ENCODE measurements at regions of chr1 and their contacts with region 1.

Region 1: DNA sequence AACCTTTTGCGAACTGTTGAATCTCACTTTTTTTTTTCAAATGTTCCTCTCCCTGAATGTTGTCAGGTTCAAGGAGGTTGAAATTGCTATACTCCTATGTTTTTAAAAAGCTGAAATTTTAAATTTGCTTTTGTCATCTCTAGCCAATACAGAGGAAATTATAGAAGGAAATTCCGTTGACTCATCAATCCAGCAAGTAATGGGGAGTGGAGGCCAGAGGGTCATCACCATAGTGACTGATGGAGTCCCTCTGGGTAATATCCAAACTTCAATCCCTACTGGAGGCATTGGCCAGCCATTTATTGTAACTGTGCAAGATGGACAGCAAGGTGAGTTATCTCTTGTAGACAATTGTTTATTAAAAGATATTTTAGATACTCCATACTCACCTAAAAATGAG is 36.3 kb downstream of the GABPB2 start:
- DNase-seq: no peak
- H3K4me3 Mint-ChIP-seq: no peak overlapping the region
- H3K27ac Mint-ChIP-seq: no peak overlapping the region
- H3K4me1 Mint-ChIP-seq: no peaks in the 10 kb centered on the region
- H3K27me3 Mint-ChIP-seq: no peaks in the 10 kb centered on the region

Region 2: DNA sequence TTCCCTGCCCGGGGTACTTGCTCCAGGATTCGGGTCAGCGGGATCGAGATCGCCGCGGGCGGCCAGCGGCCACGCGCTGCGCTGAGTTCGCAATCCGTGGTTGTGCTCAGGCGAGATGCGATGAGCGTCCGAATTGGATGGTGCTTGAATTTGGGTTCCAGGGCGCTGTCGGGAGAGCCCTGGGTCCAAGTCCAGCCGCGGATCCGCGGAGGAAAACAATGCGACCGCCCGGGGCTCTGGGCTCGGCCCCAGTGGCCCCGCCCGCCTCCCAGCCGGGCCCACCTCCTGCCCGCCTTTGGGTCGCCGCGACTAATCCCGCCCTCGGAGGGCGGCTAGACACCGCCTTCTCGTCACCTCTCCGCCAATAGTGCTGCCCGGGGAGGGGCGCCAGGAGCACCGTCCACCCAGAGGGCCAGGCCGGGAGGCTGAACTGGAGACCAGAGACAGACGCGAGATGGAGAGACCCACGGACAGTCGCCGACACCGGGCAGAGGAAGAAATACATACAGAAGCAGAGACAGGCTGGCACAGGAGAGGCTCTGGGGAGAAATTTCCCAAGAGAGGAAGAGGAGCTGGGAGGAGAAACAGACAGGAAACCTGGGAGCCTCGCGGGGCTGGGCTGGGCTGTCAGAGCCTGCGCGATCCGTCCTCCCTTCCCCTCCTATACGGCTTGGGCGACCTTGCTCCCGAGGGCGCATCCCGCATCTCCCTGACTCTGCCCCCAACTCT is 39.7 kb after region 1 on chr1 and contains the start of gene SEMA6C:
- CTCF ChIA-PET with region 1: interaction called, 255 read pairs
- intact Hi-C with region 1: no loop called
- DNase-seq: peak; percentile 89
- H3K4me3 Mint-ChIP-seq: peak within 1 kb of the TSS; percentile 88
- H3K27ac Mint-ChIP-seq: peak within 1 kb of the TSS; percentile 51
- H3K4me1 Mint-ChIP-seq: peaks cover 6% of the 10 kb centered on the region
- H3K27me3 Mint-ChIP-seq: no peaks in the 10 kb centered on the region
- total RNA-seq, gene SEMA6C: 1.5 to 1.6 TPM

Region 3: DNA sequence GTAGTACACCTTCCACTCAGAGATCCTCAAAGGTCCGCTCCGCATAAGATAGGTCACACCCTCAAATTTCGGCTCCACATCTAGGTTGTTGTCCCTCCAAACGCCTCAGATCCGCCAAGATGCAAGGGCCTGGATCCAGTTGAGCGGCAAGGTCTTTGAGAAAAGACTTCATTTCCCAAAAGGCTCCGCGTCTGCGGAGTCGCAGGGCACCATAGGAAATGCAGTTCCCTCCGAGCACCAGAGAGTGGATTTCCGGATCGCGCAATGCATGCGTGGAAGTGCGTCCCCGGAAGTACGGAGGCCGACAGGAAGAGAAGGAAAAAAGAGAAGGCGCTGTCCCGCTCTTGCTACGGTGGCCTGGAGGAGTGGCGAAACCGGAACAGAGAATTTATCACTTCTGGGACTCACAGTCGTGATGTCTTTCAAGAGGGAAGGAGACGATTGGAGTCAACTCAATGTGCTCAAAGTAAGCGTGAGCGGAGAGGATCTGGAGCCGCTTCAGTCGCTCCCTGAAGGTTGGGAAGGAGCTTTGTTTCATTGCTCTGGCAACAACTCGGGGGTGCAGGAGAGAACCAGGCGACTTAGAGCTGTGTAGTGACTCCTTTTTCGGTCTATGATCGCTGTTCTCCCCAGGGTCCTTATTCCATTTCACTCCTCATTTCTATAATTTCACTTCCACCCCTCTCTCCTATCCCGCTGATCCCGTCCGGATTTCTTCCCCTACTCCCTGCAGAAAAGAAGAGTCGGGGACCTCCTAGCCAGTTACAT is 59.0 kb after region 1 on chr1 and contains the starts of genes LYSMD1 and SCNM1:
- CTCF ChIA-PET with region 1: no interaction called
- intact Hi-C with region 1: no loop called
- DNase-seq: peak; percentile 99
- H3K4me3 Mint-ChIP-seq: peak within 1 kb of the TSS; percentile 92
- H3K27ac Mint-ChIP-seq: peak within 1 kb of the TSS; percentile 90
- H3K4me1 Mint-ChIP-seq: peaks cover 51% of the 10 kb centered on the region
- H3K27me3 Mint-ChIP-seq: no peaks in the 10 kb centered on the region
- total RNA-seq, gene LYSMD1: 4.5 to 4.8 TPM
- total RNA-seq, gene SCNM1: 60.5 to 64.2 TPM